Activated T-helper 1 cell treated with anti-CD3 and anti-CD28 coated beads, Interleukin-12 subunit alpha, Interleukin-12 subunit beta, Interleukin-2, Interleukin-4 antibody, amounts not matched to agents 30 ng/mL and 10 ng/mL and 1 ng/mL, durations not matched to agents 14 hours and 24 hours and 36 hours (primary cell): ENCODE measurements at regions of chr6 and their contacts with region 1.

Region 1: GRCh38 chr6:45922728-45923351 is 92.8 kb downstream of the CLIC5 start:
- DNase-seq: peak; percentile 55
- H3K4me3 Mint-ChIP-seq: peak overlapping the region; percentile 43
- H3K27ac Mint-ChIP-seq: peak overlapping the region; percentile 82
- H3K4me1 Mint-ChIP-seq: peaks cover 57% of the 10 kb centered on the region
- H3K27me3 Mint-ChIP-seq: peaks cover 4% of the 10 kb centered on the region

Region 2: GRCh38 chr6:44932651-44933091 is 990.2 kb before region 1 on chr6:
- intact Hi-C with region 1: loop called (anchors 5 kb)
- DNase-seq: no peak
- H3K4me3 Mint-ChIP-seq: peak overlapping the region; percentile 79
- H3K27ac Mint-ChIP-seq: peak overlapping the region; percentile 94
- H3K4me1 Mint-ChIP-seq: peaks cover 56% of the 10 kb centered on the region
- H3K27me3 Mint-ChIP-seq: no peaks in the 10 kb centered on the region

Region 3: GRCh38 chr6:45293306-45293705 is 629.5 kb before region 1 on chr6:
- intact Hi-C with region 1: loop called (anchors 5 kb)
- DNase-seq: peak; percentile 9
- H3K4me3 Mint-ChIP-seq: peak overlapping the region; percentile 46
- H3K27ac Mint-ChIP-seq: peak overlapping the region; percentile 32
- H3K4me1 Mint-ChIP-seq: peaks cover 43% of the 10 kb centered on the region
- H3K27me3 Mint-ChIP-seq: no peaks in the 10 kb centered on the region

Region 4: GRCh38 chr6:45486736-45487135 is 436.1 kb before region 1 on chr6:
- intact Hi-C with region 1: loop called (anchors 5 kb)
- DNase-seq: no peak
- H3K4me3 Mint-ChIP-seq: no peak overlapping the region
- H3K27ac Mint-ChIP-seq: no peak overlapping the region
- H3K4me1 Mint-ChIP-seq: peaks cover 45% of the 10 kb centered on the region
- H3K27me3 Mint-ChIP-seq: no peaks in the 10 kb centered on the region

Region 5: DNA sequence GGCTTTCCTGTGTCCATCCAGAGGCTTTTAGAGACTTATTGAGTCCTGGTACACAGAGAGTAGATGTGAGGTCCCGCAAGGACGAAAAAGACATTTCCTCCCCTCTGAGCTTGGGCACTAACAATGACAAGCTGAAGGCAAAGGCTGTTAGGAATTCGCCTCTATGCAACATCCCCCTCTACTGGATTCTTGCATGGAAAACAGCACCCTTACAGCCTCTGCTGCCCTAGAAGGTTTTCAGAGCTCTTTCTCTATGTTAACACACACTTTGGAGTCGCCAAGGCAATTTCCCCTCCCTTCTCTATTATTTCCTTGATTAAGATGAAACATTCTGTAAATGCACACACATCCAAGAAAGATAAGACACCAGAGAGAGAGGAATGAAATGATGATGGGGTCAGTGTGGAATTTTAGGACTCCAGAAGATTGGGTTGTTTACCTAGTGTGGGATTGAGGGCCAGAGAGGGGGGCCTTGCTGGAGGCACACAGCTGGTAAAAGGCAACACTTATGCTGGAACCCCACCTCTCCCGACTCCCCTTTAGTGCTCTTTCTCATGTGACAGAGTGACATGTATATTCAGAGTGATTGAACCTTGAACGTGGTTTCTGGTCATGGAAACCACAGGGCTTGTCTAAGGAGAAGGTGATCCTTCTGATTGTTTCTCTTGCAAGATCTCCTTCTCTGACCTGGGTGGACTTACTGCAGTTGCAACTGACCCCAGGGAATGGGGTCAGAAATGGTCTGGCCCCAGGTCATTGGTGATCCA is 207.9 kb before region 1 on chr6:
- intact Hi-C with region 1: loop called (anchors 1 kb)
- DNase-seq: peak; percentile 46
- H3K4me3 Mint-ChIP-seq: no peak overlapping the region
- H3K27ac Mint-ChIP-seq: peak overlapping the region; percentile 73
- H3K4me1 Mint-ChIP-seq: peaks cover 38% of the 10 kb centered on the region
- H3K27me3 Mint-ChIP-seq: peaks cover 2% of the 10 kb centered on the region

Region 6: GRCh38 chr6:46170357-46171289 is 247.8 kb after region 1 on chr6 and contains the start of gene ENPP5:
- intact Hi-C with region 1: loop called (anchors 1 kb)
- DNase-seq: no peak
- H3K4me3 Mint-ChIP-seq: peak within 1 kb of the TSS; percentile 67
- H3K27ac Mint-ChIP-seq: no peak within 1 kb of the TSS
- H3K4me1 Mint-ChIP-seq: peaks cover 27% of the 10 kb centered on the region
- H3K27me3 Mint-ChIP-seq: peaks cover 71% of the 10 kb centered on the region
- total RNA-seq, gene ENPP5: not detected in 2 replicates